Activated naive CD4-positive, alpha-beta T cell treated with anti-CD3 and anti-CD28 coated beads for 36 hours (primary cell): ENCODE measurements at regions of chr10 and their contacts with region 1.

Region 1: DNA sequence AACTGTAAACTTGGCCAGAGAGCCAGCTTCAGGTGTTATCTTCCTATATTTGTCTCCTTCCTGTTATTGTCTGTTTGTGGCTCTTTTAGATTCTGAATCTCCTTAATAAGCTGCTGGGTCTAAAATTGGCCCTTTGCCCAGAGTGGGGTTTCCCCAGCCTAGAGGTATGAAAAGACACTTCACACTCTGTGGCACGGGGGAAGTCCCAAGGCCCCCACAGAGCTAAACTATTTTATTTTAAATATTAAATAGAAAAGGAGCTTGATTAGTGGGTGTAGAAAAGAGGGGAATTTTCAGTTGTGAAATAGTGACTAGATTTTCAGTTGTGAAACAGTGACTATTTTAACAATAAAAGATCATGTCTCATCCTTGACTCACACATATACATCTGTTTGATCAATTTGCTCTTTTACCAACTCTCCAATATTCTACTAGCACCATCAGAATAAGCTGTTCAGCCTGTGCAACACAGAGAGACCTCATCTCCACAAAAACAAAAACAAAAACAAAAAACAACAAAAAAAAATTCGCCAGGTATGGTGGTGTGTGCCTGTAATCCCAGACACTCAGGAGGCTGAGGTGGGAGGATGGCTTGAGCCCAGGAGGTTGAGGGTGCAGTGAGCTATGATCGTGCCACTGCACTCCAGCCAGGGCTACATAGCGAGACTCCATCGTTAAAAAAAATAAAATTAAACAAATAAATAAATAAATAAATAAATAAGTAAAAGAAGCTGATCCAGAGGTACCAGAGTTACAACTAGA is 24.9 kb upstream of the ADO start:
- DNase-seq: peak; percentile 94
- H3K4me3 Mint-ChIP-seq: no peak overlapping the region
- H3K27ac Mint-ChIP-seq: peak overlapping the region; percentile 59
- H3K4me1 Mint-ChIP-seq: peaks cover 21% of the 10 kb centered on the region
- H3K27me3 Mint-ChIP-seq: no peaks in the 10 kb centered on the region

Region 2: GRCh38 chr10:62748386-62748785 is 31.3 kb before region 1 on chr10:
- CTCF ChIA-PET with region 1: interaction called, 5 read pairs
- intact Hi-C with region 1: loop called (anchors 1 kb)
- DNase-seq: no peak
- H3K4me3 Mint-ChIP-seq: no peak overlapping the region
- H3K27ac Mint-ChIP-seq: no peak overlapping the region
- H3K4me1 Mint-ChIP-seq: peaks cover 26% of the 10 kb centered on the region
- H3K27me3 Mint-ChIP-seq: no peaks in the 10 kb centered on the region

Region 3: GRCh38 chr10:62759599-62760175 is 20.0 kb before region 1 on chr10:
- CTCF ChIA-PET with region 1: interaction called, 7 read pairs
- intact Hi-C with region 1: loop called (anchors 1 kb)
- DNase-seq: no peak
- H3K4me3 Mint-ChIP-seq: no peak overlapping the region
- H3K27ac Mint-ChIP-seq: no peak overlapping the region
- H3K4me1 Mint-ChIP-seq: peaks cover 30% of the 10 kb centered on the region
- H3K27me3 Mint-ChIP-seq: no peaks in the 10 kb centered on the region

Region 4: DNA sequence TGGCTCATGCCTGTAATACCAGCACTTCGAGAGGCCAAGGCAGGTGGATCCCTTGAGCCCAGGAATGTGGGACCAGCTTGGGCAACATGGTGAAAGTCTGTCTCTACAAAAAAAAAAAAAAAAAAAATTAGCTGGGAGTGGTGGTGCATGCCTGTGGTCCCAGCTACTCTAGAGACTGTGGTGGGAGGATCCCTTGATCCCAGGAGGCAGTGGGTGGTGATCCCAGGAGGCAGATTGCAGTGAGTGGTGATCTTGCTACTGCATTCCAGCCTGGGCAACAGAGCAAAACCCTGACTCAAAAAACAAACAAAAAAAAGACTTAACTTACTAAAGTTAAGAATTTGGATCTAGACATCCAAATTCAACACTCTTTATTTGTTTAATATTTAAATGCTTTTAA is 14.6 kb after region 1 on chr10:
- CTCF ChIA-PET with region 1: no interaction called
- intact Hi-C with region 1: no loop called
- DNase-seq: no peak
- H3K4me3 Mint-ChIP-seq: no peak overlapping the region
- H3K27ac Mint-ChIP-seq: no peak overlapping the region
- H3K4me1 Mint-ChIP-seq: peaks cover 4% of the 10 kb centered on the region
- H3K27me3 Mint-ChIP-seq: peaks cover 18% of the 10 kb centered on the region

Region 5: DNA sequence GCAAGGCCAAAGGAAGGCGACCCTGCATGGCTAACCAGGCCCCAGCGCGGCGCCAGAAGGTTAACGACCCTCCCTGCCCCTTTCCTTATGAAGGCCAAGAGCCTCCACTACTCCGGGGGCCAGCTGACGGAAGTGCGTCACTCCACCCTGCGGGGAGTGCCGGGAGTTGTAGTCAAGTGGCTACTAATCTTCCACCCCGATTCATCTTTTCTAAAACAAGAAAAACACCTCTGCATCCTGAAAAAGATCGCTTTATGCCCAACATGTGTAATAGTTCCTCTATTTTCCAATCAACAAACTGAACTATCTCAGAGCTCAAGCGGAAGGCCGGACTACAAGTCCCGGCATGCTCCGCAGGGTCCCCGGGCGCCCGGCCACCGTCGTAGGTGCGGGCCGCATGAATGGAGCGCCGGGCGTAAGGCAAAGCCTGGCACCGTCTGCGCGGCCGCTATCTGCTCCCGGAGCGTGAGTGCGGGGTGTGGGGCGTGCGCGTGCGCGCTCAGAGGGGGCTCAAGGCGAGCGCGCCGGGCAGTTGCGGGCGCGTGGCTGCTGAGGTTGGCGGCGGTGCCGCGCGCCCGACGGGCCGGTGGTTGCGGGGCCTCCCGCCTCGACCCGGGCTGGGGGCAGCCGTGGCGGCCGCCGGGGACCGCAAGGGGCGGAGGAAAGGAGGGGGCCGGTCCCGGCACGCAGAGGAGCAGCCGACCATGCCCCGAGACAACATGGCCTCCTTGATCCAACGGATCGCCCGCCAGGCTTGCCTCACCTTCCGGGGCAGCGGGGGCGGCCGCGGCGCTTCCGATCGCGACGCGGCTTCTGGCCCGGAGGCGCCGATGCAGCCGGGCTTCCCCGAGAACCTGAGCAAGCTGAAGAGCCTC is 24.9 kb after region 1 on chr10 and contains the start of gene ADO:
- CTCF ChIA-PET with region 1: interaction called, 11 read pairs
- intact Hi-C with region 1: loop called (anchors 1 kb)
- DNase-seq: peak; percentile 82
- H3K4me3 Mint-ChIP-seq: peak within 1 kb of the TSS; percentile 97
- H3K27ac Mint-ChIP-seq: peak within 1 kb of the TSS; percentile 100
- H3K4me1 Mint-ChIP-seq: peaks cover 37% of the 10 kb centered on the region
- H3K27me3 Mint-ChIP-seq: no peaks in the 10 kb centered on the region
- total RNA-seq, gene ADO: 24.9 to 26.2 TPM

Region 6: GRCh38 chr10:62811159-62811875 is 31.6 kb after region 1 on chr10:
- CTCF ChIA-PET with region 1: interaction called, 11 read pairs
- intact Hi-C with region 1: loop called (anchors 1 kb)
- DNase-seq: peak; percentile 91
- H3K4me3 Mint-ChIP-seq: peak overlapping the region; percentile 30
- H3K27ac Mint-ChIP-seq: peak overlapping the region; percentile 79
- H3K4me1 Mint-ChIP-seq: peaks cover 78% of the 10 kb centered on the region
- H3K27me3 Mint-ChIP-seq: no peaks in the 10 kb centered on the region

Region 7: GRCh38 chr10:63105225-63106110 is 325.8 kb after region 1 on chr10:
- CTCF ChIA-PET with region 1: no interaction called
- intact Hi-C with region 1: no loop called
- DNase-seq: no peak
- H3K4me3 Mint-ChIP-seq: no peak overlapping the region
- H3K27ac Mint-ChIP-seq: no peak overlapping the region
- H3K4me1 Mint-ChIP-seq: no peaks in the 10 kb centered on the region
- H3K27me3 Mint-ChIP-seq: peaks cover 15% of the 10 kb centered on the region